ENCODE measurements at regions of chr1 and their contacts with region 1.

Region 1: GRCh38 chr1:91021686-91022517 is at the start of gene ZNF644:
- DNase-seq: peak; percentile 95
- H3K4me3 ChIP-seq: peak within 1 kb of the TSS; percentile 74
- H3K27ac ChIP-seq: peak within 1 kb of the TSS; percentile 99
- H3K4me1 ChIP-seq: peaks cover 24% of the 10 kb centered on the region
- H3K27me3 ChIP-seq: no peaks in the 10 kb centered on the region
- CTCF ChIP-seq: no peak
- total RNA-seq, gene ZNF644: 69.6 and 80.4 TPM in 2 replicates

Region 2: GRCh38 chr1:91036894-91037829 is 15.3 kb after region 1 on chr1:
- CTCF ChIA-PET with region 1: no interaction called
- POLR2A ChIA-PET with region 1: no interaction called
- intact Hi-C with region 1: no loop called
- DNase-seq: no peak
- H3K4me3 ChIP-seq: no peak overlapping the region
- H3K27ac ChIP-seq: no peak overlapping the region
- H3K4me1 ChIP-seq: no peaks in the 10 kb centered on the region
- H3K27me3 ChIP-seq: no peaks in the 10 kb centered on the region
- CTCF ChIP-seq: no peak

Region 3: DNA sequence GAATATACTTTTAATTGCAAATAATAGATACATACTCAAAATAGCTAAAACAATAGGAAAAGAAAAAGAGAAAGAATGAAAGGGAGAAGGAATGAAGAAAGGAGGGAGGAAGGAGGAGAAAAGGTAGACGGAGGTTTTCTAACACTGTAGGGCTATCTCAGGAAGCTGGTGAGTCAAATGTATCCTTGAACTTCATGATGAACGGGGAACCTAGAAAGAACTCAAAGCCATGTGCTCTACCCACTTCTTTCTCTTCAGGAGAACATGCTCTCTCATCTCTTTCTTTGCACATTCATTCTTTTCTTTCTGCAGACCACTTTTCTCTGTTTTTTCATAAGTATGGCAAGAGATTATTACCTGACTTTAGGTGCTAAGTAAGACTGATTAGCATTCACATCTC is 37.3 kb after region 1 on chr1:
- CTCF ChIA-PET with region 1: no interaction called
- POLR2A ChIA-PET with region 1: interaction called, 10 read pairs
- intact Hi-C with region 1: no loop called
- DNase-seq: no peak
- H3K4me3 ChIP-seq: no peak overlapping the region
- H3K27ac ChIP-seq: no peak overlapping the region
- H3K4me1 ChIP-seq: no peaks in the 10 kb centered on the region
- H3K27me3 ChIP-seq: no peaks in the 10 kb centered on the region
- CTCF ChIP-seq: no peak

Measured in A673 (cell line).